Spleen (tissue), 13 donors: ENCODE measurements at regions of chr4 and their contacts with region 1.

Region 1: GRCh38 chr4:2220016-2220630 is 21.8 kb downstream of the HAUS3 start:
- DNase-seq: peak; percentile 89
- H3K4me3 ChIP-seq: no peak overlapping the region
- H3K27ac ChIP-seq: no peak overlapping the region
- H3K4me1 ChIP-seq: peaks cover 0 to 9% (median 3%) of the 10 kb centered on the region in 6 donors
- H3K27me3 ChIP-seq: no peaks in the 10 kb centered on the region
- CTCF ChIP-seq: peak; percentile 65 to 89 (median 82)
- POLR2A ChIP-seq: no peak

Region 2: GRCh38 chr4:1626151-1626550 is 594.0 kb before region 1 on chr4:
- intact Hi-C with region 1: no loop called
- DNase-seq: peak; percentile 61
- H3K4me3 ChIP-seq: no peak overlapping the region
- H3K27ac ChIP-seq: no peak overlapping the region
- H3K4me1 ChIP-seq: peaks cover 0 to 8% (median 5%) of the 10 kb centered on the region in 6 donors
- H3K27me3 ChIP-seq: peaks cover 0 to 9% (median 0%) of the 10 kb centered on the region in 7 donors
- CTCF ChIP-seq: no peak
- POLR2A ChIP-seq: no peak

Region 3: GRCh38 chr4:2441393-2442174 is 221.5 kb after region 1 on chr4:
- intact Hi-C with region 1: loop called (anchors 5 kb)
- DNase-seq: peak; percentile 87
- H3K4me3 ChIP-seq: no peak overlapping the region
- H3K27ac ChIP-seq: no peak overlapping the region
- H3K4me1 ChIP-seq: peaks cover 0 to 9% (median 2%) of the 10 kb centered on the region in 6 donors
- H3K27me3 ChIP-seq: peaks cover 0 to 5% (median 0%) of the 10 kb centered on the region in 7 donors
- CTCF ChIP-seq: peak; percentile 65 to 90 (median 82)
- POLR2A ChIP-seq: no peak

Region 4: GRCh38 chr4:2792711-2793585 is 572.8 kb after region 1 on chr4 and contains the start of gene SH3BP2:
- intact Hi-C with region 1: no loop called
- DNase-seq: peak; percentile 95
- H3K4me3 ChIP-seq: peak within 1 kb of the TSS; percentile 58 to 78 (median 70)
- H3K27ac ChIP-seq: peak within 1 kb of the TSS; percentile 77 to 98 (median 88)
- H3K4me1 ChIP-seq: peaks cover 52 to 96% (median 87%) of the 10 kb centered on the region in 6 donors
- H3K27me3 ChIP-seq: no peaks in the 10 kb centered on the region
- CTCF ChIP-seq: peak in 2 of 11 experiments; percentile 11 to 19
- POLR2A ChIP-seq: peak in 1 of 3 donors; percentile 13
- total RNA-seq, gene SH3BP2: 150 to 295 (median 265) TPM